OCI-LY7 (cell line): ENCODE measurements at regions of chr17 and their contacts with region 1.

Region 1: DNA sequence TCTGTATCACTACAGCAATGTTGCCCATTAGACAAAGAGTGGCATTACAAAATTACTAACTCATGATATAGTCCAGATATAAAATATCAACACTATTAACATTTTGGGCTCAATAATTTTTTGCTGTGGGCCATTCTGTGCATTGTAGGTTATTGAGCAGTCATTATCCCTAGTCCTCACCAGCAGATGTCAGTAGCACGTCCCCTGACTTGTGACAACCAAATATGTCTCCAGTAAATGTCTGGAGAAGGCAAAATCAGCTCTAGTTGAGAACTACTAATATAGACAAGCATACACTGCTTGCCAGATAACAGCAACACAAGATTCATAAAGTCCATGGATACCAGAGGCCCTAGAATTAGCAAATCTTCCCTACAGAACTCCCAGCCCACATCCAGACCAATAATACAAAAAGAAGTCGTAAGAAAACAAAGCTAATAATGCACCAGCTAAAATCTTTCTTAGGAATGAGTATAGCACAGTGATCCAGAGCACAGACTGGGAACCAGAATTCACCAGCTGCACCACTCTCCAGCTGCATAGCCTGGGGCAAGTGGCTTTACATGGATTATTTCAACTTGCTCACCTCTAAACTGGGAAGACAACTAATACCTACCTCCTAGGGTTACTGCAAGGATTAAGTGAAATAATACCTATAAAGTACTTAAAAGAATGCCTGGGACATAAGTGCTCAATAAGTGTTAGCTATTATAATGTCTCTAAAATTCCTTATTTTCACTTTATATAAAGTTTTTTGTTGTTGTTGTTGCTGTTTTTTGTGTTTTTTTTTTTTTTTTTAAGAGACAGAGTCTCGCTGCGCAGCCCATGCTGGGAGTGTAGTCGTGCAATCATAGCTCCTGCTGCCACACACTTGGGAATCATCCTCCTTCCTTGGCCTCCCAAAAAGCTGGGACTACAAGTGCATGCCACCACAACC is 23.7 kb downstream of the HELZ start:
- DNase-seq: peak; percentile 30
- H3K4me3 ChIP-seq: no peak overlapping the region
- H3K27ac ChIP-seq: no peak overlapping the region
- H3K4me1 ChIP-seq: no peaks in the 10 kb centered on the region
- CTCF ChIP-seq: peak; percentile 75

Region 2: GRCh38 chr17:67293251-67294203 is 72.2 kb after region 1 on chr17:
- CTCF ChIA-PET with region 1: no interaction called
- POLR2A ChIA-PET with region 1: interaction called, 4 read pairs
- intact Hi-C with region 1: loop called (anchors 2 kb)
- DNase-seq: peak; percentile 83
- H3K4me3 ChIP-seq: no peak overlapping the region
- H3K27ac ChIP-seq: no peak overlapping the region
- H3K4me1 ChIP-seq: peaks cover 6% of the 10 kb centered on the region
- CTCF ChIP-seq: peak; percentile 83